ENCODE measurements at regions of chr10 and their contacts with region 1.

Region 1: DNA sequence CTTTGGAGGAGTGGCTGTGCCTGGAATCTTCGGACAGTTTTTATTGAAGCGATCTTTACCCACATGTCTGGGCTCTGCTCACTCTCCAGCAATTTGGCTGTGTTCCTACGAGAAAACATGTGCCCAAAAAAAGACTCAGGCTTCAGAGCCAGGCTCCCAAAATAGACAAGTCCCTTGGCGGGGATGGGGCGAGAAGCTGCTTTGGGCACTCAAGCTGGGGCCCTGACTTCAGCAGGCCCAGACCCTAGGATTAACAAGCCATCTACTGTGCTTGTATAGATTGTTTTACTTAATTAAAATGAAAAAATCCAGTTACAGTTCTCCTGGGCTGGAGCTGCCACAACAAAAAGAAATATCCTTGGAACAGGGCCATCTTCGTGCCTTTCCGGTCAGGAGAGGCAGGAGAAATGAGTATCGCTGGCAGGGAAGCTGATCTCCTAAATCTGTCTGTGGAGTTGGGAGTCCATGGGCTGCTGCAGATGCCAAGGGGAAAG is 51.4 kb upstream of the PDCD4 start:
- DNase-seq: peak; percentile 70 to 81
- ATAC-seq: peak; percentile 76
- H3K4me3 ChIP-seq: no peak overlapping the region
- H3K27ac ChIP-seq: peak overlapping the region; percentile 85 to 93
- H3K4me1 ChIP-seq: peaks cover 10 to 16% of the 10 kb centered on the region in 2 donors
- H3K27me3 ChIP-seq: no peaks in the 10 kb centered on the region

Region 2: DNA sequence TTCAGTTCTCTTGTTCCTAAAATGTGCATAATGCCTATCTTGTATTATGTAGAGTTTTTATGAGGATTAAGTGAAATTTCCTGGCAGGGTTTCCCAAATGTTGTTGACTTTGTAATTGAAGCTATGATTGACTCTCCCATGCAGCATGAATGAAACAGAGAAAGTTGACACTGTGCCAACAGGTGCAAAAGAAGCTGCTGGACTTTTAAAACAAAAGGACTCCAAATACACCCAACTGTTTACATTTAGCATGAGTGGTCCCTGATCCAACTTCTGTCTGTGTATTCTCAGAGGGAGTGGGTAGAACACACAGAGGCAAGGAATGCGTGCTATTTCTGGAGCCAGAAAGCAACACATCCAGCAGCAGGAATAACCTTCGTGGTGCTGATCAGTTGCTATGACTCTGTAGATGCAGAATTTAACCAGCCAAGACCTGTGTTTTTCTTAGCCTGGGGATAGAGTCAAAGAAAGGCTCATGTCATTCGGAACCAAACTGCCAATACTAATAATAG is 190.6 kb before region 1 on chr10:
- intact Hi-C with region 1: no loop called
- DNase-seq: no peak
- ATAC-seq: peak; percentile 78
- H3K4me3 ChIP-seq: no peak overlapping the region
- H3K27ac ChIP-seq: peak overlapping the region; percentile 97 to 98
- H3K4me1 ChIP-seq: peaks cover 3 to 4% of the 10 kb centered on the region in 2 donors
- H3K27me3 ChIP-seq: no peaks in the 10 kb centered on the region

Region 3: GRCh38 chr10:110724116-110724921 is 96.0 kb before region 1 on chr10:
- intact Hi-C with region 1: no loop called
- DNase-seq: no peak
- ATAC-seq: no peak
- H3K4me3 ChIP-seq: no peak overlapping the region
- H3K27ac ChIP-seq: no peak overlapping the region
- H3K4me1 ChIP-seq: no peaks in the 10 kb centered on the region
- H3K27me3 ChIP-seq: no peaks in the 10 kb centered on the region

Region 4: GRCh38 chr10:110764423-110765187 is 55.8 kb before region 1 on chr10:
- intact Hi-C with region 1: loop called in 1 of 2 experiments (anchors 5 kb)
- DNase-seq: no peak
- ATAC-seq: no peak
- H3K4me3 ChIP-seq: no peak overlapping the region
- H3K27ac ChIP-seq: no peak overlapping the region
- H3K4me1 ChIP-seq: peaks cover 3 to 11% of the 10 kb centered on the region in 2 donors
- H3K27me3 ChIP-seq: no peaks in the 10 kb centered on the region

Region 5: GRCh38 chr10:110774069-110775019 is 46.0 kb before region 1 on chr10:
- intact Hi-C with region 1: loop called in 1 of 2 experiments (anchors 2 kb)
- DNase-seq: no peak
- ATAC-seq: no peak
- H3K4me3 ChIP-seq: no peak overlapping the region
- H3K27ac ChIP-seq: no peak overlapping the region
- H3K4me1 ChIP-seq: no peaks in the 10 kb centered on the region
- H3K27me3 ChIP-seq: no peaks in the 10 kb centered on the region

Region 6: DNA sequence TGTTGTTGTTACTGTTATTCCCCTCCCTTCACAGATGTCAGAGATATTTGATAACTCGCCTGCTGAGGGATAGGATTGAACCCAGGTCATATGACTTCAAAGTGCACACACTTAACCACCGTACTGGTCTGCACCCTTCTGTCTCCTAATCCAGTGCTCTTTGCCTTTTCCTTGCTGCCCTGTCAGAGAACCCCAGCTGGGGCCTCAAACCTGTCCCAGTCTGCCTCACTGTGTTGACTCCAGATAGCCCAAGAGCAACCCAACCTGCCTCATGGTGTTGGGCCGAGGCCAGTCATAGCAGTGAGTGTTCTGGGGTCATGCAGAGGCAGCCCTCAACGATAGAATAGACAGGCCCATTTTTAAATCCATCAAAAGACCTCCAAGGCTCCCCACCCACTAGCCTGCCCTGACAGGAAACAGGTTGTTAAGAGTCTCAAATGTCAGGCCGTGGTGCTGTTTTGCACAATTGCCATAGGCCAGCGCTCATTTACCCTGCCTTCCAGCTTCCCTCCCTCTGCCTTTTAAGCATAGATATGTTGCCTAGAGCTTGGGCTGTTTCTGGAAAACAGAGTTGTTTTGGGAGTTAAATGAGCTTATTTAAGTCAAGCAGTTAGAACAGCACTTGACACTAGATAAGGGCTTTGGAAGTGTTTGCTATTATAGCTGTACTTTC is 14.4 kb after region 1 on chr10:
- intact Hi-C with region 1: loop called in 1 of 2 experiments (anchors 2 kb)
- DNase-seq: peak in 1 of 2 donors; percentile 59
- ATAC-seq: peak; percentile 75
- H3K4me3 ChIP-seq: no peak overlapping the region
- H3K27ac ChIP-seq: peak overlapping the region; percentile 43 to 94
- H3K4me1 ChIP-seq: peaks cover 0 to 3% of the 10 kb centered on the region in 2 donors
- H3K27me3 ChIP-seq: no peaks in the 10 kb centered on the region

Region 7: DNA sequence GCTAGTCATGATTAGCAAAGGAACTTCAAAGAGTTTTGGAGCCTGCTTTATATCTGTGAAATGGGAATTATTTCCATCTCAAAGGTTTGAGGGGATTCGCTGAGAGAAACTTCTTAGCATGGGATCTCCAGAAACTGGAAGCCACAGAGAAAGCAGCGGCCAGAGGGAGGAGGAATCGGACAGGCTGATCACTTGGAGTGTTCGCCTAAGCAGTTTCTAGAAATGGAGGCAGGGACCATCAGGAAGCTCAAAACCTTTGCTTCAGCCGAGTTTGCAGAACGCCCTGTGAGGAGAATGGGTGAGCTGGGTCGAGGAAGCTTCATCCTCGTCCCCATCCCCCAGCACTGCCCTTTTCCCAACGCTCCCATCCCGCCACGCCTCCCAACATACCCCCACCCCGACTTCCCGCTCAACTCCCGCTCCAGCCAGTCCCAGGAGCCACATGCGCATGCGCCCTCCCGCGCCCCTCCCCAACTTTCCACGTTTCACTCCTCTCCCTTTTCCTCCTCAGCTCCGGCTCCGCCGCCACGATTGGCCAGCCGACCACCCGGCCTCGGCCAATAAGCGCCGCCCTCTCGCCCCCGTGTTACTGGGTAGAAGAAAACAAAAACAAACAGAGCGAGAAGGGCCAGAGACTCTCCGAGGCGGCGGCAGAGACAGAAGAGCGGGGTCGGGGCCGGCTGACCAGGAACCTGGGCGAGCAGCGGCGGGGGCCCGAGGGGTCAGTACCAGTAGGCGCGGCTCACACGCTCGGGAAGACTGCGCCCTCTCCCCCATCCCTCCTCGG is 51.1 kb after region 1 on chr10 and contains the start of gene PDCD4:
- intact Hi-C with region 1: loop called (anchors 5 kb)
- DNase-seq: peak; percentile 100
- ATAC-seq: peak; percentile 97
- H3K4me3 ChIP-seq: peak within 1 kb of the TSS; percentile 97 to 98
- H3K27ac ChIP-seq: peak within 1 kb of the TSS; percentile 88 to 89
- H3K4me1 ChIP-seq: peaks cover 0 to 7% of the 10 kb centered on the region in 2 donors
- H3K27me3 ChIP-seq: no peaks in the 10 kb centered on the region
- total RNA-seq, gene PDCD4: 67.5 to 124 TPM